ENCODE measurements at regions of chr5 and their contacts with region 1.

Region 1: GRCh38 chr5:148542812-148543211 is 111.5 kb downstream of the HTR4 start:
- DNase-seq: no peak
- H3K4me3 ChIP-seq: no peak overlapping the region
- H3K27ac ChIP-seq: no peak overlapping the region
- H3K4me1 ChIP-seq: no peaks in the 10 kb centered on the region
- H3K27me3 ChIP-seq: no peaks in the 10 kb centered on the region
- CTCF ChIP-seq: no peak

Region 2: GRCh38 chr5:148221510-148221909 is 321.3 kb before region 1 on chr5:
- CTCF ChIA-PET with region 1: no interaction called
- POLR2A ChIA-PET with region 1: interaction called, 10 read pairs
- intact Hi-C with region 1: no loop called
- DNase-seq: no peak
- H3K4me3 ChIP-seq: no peak overlapping the region
- H3K27ac ChIP-seq: no peak overlapping the region
- H3K4me1 ChIP-seq: no peaks in the 10 kb centered on the region
- H3K27me3 ChIP-seq: no peaks in the 10 kb centered on the region
- CTCF ChIP-seq: no peak

Region 3: DNA sequence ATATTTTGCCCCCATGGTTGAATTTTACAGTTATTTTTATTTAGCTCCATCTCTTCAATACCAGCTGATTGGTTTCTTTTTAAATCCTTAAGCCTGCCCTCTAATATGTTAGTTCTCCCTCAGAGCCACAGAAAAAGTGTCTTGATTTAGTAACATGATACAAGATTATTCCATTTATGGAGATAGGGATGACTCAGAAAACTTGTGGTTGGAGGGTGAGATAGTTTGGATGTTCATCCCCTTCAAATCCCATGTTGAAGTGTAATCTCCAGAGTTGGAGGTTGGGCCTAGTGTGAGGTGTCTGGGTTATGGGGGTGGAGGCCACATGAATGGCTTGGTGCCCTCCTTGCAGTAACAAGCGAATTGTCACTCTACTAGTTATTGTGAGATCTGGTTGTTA is 43.4 kb before region 1 on chr5:
- CTCF ChIA-PET with region 1: no interaction called
- POLR2A ChIA-PET with region 1: no interaction called
- intact Hi-C with region 1: no loop called
- DNase-seq: no peak
- H3K4me3 ChIP-seq: no peak overlapping the region
- H3K27ac ChIP-seq: no peak overlapping the region
- H3K4me1 ChIP-seq: no peaks in the 10 kb centered on the region
- H3K27me3 ChIP-seq: no peaks in the 10 kb centered on the region
- CTCF ChIP-seq: no peak

Region 4: GRCh38 chr5:148768806-148769415 is 226.1 kb after region 1 on chr5:
- CTCF ChIA-PET with region 1: no interaction called
- POLR2A ChIA-PET with region 1: no interaction called
- intact Hi-C with region 1: no loop called
- DNase-seq: no peak
- H3K4me3 ChIP-seq: no peak overlapping the region
- H3K27ac ChIP-seq: no peak overlapping the region
- H3K4me1 ChIP-seq: no peaks in the 10 kb centered on the region
- H3K27me3 ChIP-seq: no peaks in the 10 kb centered on the region
- CTCF ChIP-seq: no peak

Measured in PC-9 (cell line).